ENCODE measurements at regions of chr1 and their contacts with region 1.

Region 1: DNA sequence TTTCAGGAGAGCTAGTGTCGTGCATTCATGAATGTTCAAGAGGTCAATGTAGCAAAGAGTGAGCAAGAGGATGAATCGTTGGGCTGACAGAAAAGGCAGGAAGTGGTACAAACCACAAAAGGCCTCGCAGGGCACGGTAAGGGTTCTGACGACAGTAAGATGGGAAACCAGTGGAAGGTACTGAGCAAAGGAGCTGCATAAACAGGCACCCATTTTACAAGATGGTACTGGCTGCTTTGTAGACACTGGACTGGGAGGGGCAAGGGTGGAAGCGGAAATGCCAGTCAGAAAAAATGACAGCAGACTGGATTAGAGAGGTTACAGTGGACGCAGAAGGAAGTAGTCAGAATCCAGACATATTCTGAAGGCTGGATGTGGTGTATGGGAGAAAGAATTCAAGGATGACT is 123.5 kb downstream of the PTPN14 start:
- DNase-seq: peak; percentile 89
- H3K4me3 Mint-ChIP-seq: peak overlapping the region; percentile 41
- H3K27ac Mint-ChIP-seq: peak overlapping the region; percentile 90
- H3K4me1 Mint-ChIP-seq: peaks cover 26% of the 10 kb centered on the region
- H3K27me3 Mint-ChIP-seq: no peaks in the 10 kb centered on the region

Region 2: DNA sequence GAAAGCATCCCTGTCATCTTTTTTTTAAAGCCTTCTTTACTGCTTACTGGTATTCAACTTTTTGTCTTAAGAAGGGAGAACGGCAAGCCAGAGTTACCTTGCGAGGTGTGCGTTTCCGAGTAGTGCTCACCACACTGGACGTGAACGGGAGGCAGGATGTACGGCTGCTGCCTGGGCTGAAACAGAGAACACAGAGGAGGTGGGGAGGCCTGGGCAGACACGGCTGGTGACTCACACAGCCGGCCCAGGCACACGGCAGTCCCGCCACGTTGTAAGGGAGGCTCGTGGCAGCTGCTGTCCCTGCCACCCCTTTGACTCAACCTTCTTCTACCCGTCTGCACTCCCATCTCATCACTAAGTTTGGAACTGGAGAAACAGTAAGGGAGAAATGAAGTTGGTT is 41.1 kb before region 1 on chr1:
- CTCF ChIA-PET with region 1: no interaction called
- intact Hi-C with region 1: loop called (anchors 2 kb)
- DNase-seq: no peak
- H3K4me3 Mint-ChIP-seq: no peak overlapping the region
- H3K27ac Mint-ChIP-seq: no peak overlapping the region
- H3K4me1 Mint-ChIP-seq: no peaks in the 10 kb centered on the region
- H3K27me3 Mint-ChIP-seq: no peaks in the 10 kb centered on the region

Region 3: DNA sequence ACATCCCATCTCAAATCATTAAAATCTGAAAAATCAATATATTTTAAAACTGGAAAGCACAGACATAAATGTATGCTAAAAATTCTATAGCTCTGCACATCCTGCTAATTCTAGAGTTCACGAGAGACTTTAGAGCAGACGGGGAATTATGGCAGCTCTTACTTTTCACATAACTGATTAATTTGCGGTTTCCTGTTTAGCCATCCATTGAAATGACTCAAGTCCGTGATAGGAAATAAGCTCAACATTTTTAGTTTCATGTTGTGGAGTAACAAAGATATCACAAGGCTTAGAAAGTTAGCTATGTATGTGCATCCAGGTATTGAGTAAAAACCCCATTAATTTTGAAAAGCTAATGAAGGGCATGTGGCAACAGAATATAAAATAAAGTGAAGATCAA is 23.7 kb before region 1 on chr1:
- CTCF ChIA-PET with region 1: no interaction called
- intact Hi-C with region 1: loop called (anchors 2 kb)
- DNase-seq: no peak
- H3K4me3 Mint-ChIP-seq: no peak overlapping the region
- H3K27ac Mint-ChIP-seq: peak overlapping the region; percentile 31
- H3K4me1 Mint-ChIP-seq: peaks cover 9% of the 10 kb centered on the region
- H3K27me3 Mint-ChIP-seq: no peaks in the 10 kb centered on the region

Region 4: DNA sequence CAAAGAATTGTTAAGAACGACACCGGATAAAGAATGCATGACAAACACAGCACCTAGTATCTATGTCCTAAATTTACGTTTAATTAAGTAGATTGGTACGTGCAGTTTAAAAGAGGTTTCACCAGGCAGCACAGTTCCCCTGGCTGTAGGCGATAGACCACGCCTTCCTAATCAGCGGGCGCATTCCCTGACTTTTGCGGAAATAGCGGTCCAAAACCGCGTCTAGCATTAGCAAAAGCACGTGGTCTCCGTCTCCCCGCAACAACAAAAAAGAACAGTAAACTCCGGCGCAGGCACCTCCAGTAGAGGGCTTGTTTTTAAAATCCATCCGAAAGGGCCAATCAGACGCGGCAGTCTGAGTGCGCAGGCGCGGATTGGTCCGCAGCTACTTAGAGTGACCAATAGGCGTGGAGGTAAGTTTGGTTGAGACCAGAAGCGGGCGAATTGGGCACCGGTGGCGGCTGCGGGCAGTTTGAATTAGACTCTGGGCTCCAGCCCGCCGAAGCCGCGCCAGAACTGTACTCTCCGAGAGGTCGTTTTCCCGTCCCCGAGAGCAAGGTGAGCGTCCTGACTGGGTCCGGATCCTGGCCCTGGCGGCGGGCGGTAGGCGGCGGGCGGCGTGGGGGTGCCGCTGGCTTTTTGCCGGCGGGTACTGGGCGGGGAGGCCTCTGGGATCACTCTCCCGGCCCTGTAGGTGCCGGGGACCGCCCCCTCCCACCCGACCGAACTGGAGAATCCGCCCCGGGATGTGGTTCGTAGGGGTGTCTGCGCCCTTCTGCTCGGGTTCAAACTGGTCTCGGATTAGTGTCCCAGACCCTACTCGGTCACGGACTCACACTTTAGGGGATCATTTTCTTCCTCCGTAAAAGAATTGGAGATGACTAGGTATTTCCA is 175.1 kb after region 1 on chr1 and contains the start of gene CENPF:
- CTCF ChIA-PET with region 1: no interaction called
- intact Hi-C with region 1: loop called (anchors 1 kb)
- DNase-seq: peak; percentile 97
- H3K4me3 Mint-ChIP-seq: peak within 1 kb of the TSS; percentile 97
- H3K27ac Mint-ChIP-seq: peak within 1 kb of the TSS; percentile 90
- H3K4me1 Mint-ChIP-seq: peaks cover 8% of the 10 kb centered on the region
- H3K27me3 Mint-ChIP-seq: no peaks in the 10 kb centered on the region
- total RNA-seq, gene CENPF: 116 to 128 TPM

Measured in activated naive CD4-positive, alpha-beta T cell treated with anti-CD3 and anti-CD28 coated beads for 36 hours (primary cell).